Activated CD8-positive, alpha-beta T cell treated with anti-CD3 and anti-CD28 coated beads for 36 hours (primary cell): ENCODE measurements at regions of chr5 and their contacts with region 1.

Region 1: DNA sequence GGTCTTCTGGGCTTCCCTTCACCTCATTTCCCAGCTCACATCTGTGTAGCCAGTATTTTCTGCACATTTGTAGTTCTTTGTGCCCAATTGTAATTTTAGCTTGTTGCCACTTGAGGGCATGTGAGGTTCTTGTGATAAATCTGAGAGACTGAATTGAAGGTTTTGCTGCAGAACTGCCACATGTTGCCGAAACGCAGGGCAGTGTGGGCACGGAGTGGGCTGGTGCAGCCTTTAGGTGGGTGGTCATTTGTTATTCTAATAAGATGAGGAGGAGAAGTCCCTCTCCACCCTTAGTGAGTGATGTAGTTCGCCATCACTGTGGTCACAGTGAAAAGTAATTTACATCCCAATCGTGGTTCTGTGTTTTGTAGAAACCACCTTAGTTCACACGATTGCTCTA is 21.2 kb downstream of the OTULIN start:
- DNase-seq: peak; percentile 77
- ATAC-seq: peak; percentile 90
- H3K4me3 Mint-ChIP-seq: peak overlapping the region; percentile 24
- H3K27ac Mint-ChIP-seq: peak overlapping the region; percentile 78
- H3K4me1 Mint-ChIP-seq: peaks cover 18% of the 10 kb centered on the region
- H3K27me3 Mint-ChIP-seq: no peaks in the 10 kb centered on the region
- CTCF ChIP-seq: peak; percentile 87

Region 2: DNA sequence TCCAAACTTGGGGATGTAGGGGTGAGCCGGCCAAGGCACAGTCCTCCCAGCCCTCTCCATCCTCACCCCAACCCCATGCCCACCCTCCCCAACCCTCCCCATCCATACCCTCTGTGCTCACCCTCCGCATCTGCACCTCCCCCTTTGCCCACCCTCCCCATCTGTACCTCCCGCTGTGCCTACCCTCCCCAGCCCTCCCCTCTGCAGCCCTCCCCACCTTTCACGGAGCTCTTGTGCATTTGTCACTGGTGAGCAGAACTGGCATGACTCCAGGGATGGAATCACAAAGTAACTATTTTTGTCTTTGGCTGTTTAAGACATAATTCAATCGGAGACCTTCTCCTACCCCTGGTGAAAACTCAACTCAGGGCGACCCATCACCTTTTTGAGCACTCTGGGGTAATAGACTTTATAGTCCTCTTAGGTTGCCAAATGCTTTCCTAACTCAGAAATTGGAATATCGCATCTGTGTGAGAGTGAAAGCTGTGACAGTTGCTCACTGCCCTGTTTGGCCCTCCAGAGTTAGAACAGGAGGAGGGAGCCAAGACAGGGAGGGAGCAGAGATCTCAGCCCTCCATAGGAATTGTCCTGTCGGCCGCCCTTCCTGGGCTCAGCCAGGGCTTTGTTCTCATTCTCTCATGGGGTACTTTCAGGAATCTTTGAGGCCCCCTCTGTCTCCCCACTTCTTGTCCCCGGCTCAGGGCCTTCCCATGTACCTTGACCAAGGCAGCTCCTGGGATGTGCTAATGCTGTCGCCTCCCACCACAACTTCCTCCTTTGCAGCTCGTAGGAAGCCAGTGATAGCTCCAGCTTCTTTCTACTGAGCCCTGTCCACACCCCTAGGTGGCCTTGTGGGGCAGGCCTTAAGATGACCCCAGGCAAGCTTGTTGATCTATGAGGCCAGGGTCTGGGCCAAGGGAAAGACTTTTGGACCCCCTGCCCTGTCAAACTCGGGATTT is 15.0 kb after region 1 on chr5:
- CTCF ChIA-PET with region 1: interaction called, 20 read pairs
- POLR2A ChIA-PET with region 1: interaction called, 5 read pairs
- intact Hi-C with region 1: no loop called
- DNase-seq: no peak
- ATAC-seq: no peak
- H3K4me3 Mint-ChIP-seq: no peak overlapping the region
- H3K27ac Mint-ChIP-seq: peak overlapping the region; percentile 44
- H3K4me1 Mint-ChIP-seq: peaks cover 56% of the 10 kb centered on the region
- H3K27me3 Mint-ChIP-seq: no peaks in the 10 kb centered on the region
- CTCF ChIP-seq: no peak

Region 3: GRCh38 chr5:14706615-14707021 is 20.9 kb after region 1 on chr5:
- CTCF ChIA-PET with region 1: interaction called, 20 read pairs
- POLR2A ChIA-PET with region 1: interaction called, 6 read pairs
- intact Hi-C with region 1: no loop called
- DNase-seq: peak; percentile 33
- ATAC-seq: peak; percentile 91
- H3K4me3 Mint-ChIP-seq: peak overlapping the region; percentile 46
- H3K27ac Mint-ChIP-seq: peak overlapping the region; percentile 97
- H3K4me1 Mint-ChIP-seq: peaks cover 68% of the 10 kb centered on the region
- H3K27me3 Mint-ChIP-seq: no peaks in the 10 kb centered on the region
- CTCF ChIP-seq: no peak

Region 4: DNA sequence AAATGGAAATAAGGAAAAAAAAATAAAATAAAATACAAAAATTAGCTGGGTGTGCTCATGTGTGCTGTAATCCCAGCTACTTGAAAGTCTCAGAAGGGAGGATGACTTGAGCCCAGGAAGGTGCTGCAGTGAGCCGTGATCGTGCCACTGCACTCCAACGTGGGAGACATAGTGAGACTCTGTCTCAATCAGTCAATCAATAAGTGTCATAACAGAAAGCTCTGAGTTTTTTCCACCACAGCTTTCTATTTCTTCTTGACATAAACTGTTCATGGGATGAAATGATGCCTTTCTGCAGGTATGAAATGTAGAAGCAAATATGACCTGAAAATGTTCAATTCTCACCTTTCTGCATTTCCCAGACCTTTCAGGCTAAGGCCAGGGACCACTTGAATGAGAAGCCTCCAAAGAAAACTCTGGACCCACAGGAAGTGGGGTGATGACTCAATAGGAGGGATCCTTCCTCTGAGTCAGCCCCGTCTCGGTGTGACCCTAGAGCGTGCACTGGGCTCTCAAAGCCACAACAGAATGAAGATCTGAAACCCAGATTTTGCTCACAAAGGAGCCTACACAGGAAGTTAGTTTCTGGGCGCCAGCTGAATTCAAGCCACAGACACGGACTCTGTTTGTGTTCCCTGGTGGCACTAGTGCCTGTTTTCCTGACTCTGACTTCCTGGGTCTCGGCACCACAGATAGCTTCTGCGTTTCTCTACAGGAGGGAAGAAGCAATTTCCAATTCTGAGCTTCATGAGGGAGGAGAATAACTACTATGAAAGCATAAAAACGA is 123.8 kb after region 1 on chr5:
- CTCF ChIA-PET with region 1: no interaction called
- POLR2A ChIA-PET with region 1: no interaction called
- intact Hi-C with region 1: no loop called
- DNase-seq: peak; percentile 89
- ATAC-seq: peak; percentile 97
- H3K4me3 Mint-ChIP-seq: peak overlapping the region; percentile 55
- H3K27ac Mint-ChIP-seq: peak overlapping the region; percentile 86
- H3K4me1 Mint-ChIP-seq: peaks cover 59% of the 10 kb centered on the region
- H3K27me3 Mint-ChIP-seq: no peaks in the 10 kb centered on the region
- CTCF ChIP-seq: no peak